ENCODE measurements at regions of chr11 and their contacts with region 1.

Region 1: DNA sequence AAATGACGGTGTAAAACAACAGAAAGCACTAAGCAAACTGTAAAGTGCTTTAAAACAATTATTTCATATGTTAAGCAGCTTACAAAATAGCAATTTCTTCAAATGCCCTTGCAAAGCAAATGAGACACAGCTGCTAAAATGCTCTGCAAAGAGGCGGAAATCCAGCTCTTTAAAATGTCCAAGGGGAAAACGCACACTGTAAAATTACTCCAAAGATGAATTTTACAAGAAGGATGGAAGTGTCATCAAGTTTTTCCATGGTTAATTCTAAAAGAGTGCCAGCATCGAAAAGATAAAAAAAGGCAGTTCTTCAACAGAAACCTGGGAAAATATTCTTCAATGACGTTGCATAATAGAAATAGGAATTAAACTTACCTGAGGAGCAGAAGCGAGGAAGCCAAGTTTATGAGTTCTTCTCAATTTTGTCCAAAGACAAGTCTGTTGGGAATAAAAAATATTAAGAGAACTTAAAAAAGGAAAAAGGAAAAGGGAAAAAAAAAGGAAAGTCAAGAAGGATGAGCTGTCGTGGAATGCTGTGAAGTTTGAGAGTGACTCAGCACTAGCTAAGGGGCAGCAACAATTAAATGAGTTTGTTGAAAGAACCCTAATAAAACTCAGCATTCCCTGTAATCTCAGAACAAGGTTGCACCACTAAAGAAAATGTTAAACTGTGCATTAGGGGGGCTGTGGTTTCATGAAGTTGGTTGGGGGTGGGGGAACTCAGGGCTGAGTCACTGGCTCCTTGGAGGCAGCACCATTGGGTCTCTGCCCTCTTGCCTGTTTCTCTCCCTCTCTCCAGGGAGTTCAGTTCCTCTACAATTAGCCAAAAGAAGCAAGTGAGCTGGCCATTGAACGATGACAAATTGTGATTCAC is 64.2 kb upstream of the BLID start:
- DNase-seq: peak; percentile 99
- ATAC-seq: peak; percentile 79
- H3K4me3 ChIP-seq: peak overlapping the region; percentile 78
- H3K27ac ChIP-seq: peak overlapping the region; percentile 99
- H3K4me1 ChIP-seq: peaks cover 49% of the 10 kb centered on the region
- H3K27me3 ChIP-seq: no peaks in the 10 kb centered on the region
- CTCF ChIP-seq: no peak

Region 2: GRCh38 chr11:121829159-121829643 is 351.0 kb before region 1 on chr11:
- CTCF ChIA-PET with region 1: no interaction called
- POLR2A ChIA-PET with region 1: interaction called, 36 read pairs
- intact Hi-C with region 1: no loop called
- DNase-seq: peak; percentile 85
- ATAC-seq: peak; percentile 92
- H3K4me3 ChIP-seq: no peak overlapping the region
- H3K27ac ChIP-seq: peak overlapping the region; percentile 85
- H3K4me1 ChIP-seq: peaks cover 20% of the 10 kb centered on the region
- H3K27me3 ChIP-seq: no peaks in the 10 kb centered on the region
- CTCF ChIP-seq: no peak

Region 3: DNA sequence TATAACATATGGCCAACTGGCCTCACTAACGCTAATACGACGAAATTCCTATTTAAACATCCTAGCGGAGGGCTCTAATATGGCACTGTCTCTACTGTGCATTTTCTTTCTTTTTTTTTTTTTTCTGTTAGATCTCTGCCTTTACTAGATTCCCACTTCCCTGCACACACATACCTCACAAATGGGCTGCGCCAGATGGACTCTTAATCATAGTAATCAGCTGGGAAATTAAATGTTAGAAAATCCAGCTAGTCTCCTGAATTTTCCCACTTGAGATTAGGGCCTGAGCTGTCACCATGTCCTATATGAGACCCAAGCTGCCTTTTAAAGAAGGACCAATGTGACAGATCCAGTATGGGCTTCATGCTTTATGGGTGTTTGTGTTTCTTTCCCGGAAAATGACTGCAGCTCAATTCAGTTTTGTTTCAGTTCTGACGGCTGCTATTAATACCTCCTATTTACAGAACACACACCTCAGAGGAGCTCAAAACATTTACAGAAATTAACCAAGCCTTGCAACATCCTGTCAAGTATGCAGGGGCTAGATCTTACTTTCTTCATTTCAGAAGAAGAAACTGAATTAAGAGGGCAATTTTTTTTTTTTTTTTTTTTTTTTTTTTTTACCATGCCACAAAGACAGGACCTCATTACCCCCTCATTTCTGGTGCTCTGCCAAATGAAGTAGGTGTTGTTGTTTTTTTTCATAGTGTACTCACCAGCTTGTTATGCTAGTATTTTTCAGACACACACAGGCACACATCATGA is 14.4 kb before region 1 on chr11:
- CTCF ChIA-PET with region 1: no interaction called
- POLR2A ChIA-PET with region 1: interaction called, 12 read pairs
- intact Hi-C with region 1: loop called (anchors 1 kb)
- DNase-seq: no peak
- ATAC-seq: no peak
- H3K4me3 ChIP-seq: peak overlapping the region; percentile 9; the same call in 1 of the 2 replicates
- H3K27ac ChIP-seq: peak overlapping the region; percentile 99
- H3K4me1 ChIP-seq: peaks cover 97% of the 10 kb centered on the region
- H3K27me3 ChIP-seq: no peaks in the 10 kb centered on the region
- CTCF ChIP-seq: no peak

Region 4: GRCh38 chr11:122202951-122203456 is 22.8 kb after region 1 on chr11:
- CTCF ChIA-PET with region 1: interaction called, 4 read pairs
- POLR2A ChIA-PET with region 1: interaction called, 29 read pairs
- intact Hi-C with region 1: loop called (anchors 1 kb)
- DNase-seq: peak; percentile 95
- ATAC-seq: peak; percentile 72
- H3K4me3 ChIP-seq: peak overlapping the region; percentile 70
- H3K27ac ChIP-seq: peak overlapping the region; percentile 94
- H3K4me1 ChIP-seq: peaks cover 40% of the 10 kb centered on the region
- H3K27me3 ChIP-seq: no peaks in the 10 kb centered on the region
- CTCF ChIP-seq: peak; percentile 99

Region 5: GRCh38 chr11:123351375-123351774 is 1171.2 kb after region 1 on chr11:
- CTCF ChIA-PET with region 1: no interaction called
- POLR2A ChIA-PET with region 1: interaction called, 13 read pairs
- intact Hi-C with region 1: no loop called
- DNase-seq: no peak
- ATAC-seq: no peak
- H3K4me3 ChIP-seq: no peak overlapping the region
- H3K27ac ChIP-seq: no peak overlapping the region
- H3K4me1 ChIP-seq: no peaks in the 10 kb centered on the region
- H3K27me3 ChIP-seq: peaks cover 49% of the 10 kb centered on the region
- CTCF ChIP-seq: no peak

Measured in PC-3 (cell line).